Transverse colon (tissue), 4 donors: ENCODE measurements at regions of chr20 and their contacts with region 1.

Region 1: DNA sequence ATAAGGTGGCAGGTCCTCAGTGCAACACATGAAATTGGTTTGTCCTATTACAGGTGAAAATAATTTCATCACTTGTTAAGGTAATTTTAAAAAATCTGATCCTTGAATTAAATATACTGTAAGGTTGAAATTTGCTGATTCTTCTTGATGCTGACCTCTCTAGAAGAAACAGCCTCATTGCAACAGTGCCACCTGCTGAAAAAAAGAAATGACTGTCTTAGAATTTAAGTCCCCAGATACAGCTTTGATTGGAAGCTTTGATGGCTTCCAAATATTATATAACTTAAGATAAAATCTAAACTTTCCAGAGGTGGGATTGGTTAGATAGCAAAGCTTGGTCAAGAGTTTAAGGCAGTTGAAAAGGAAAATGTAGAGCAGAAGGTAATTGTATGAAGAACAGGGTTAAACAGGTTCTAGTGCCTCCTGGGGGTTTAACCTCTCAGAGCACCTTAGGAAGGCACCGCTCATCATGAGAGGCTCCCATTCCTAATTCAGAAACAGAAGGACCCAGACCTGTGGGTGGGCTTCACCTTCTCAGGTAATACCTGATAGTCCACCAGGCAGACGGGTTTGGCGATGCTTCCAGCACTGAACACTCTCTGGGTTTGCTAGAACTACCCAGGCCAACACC is 401.0 kb downstream of the PAX1 start:
- DNase-seq: no peak
- H3K4me3 ChIP-seq: no peak overlapping the region
- H3K27ac ChIP-seq: no peak overlapping the region
- H3K4me1 ChIP-seq: no peaks in the 10 kb centered on the region
- H3K27me3 ChIP-seq: no peaks in the 10 kb centered on the region
- CTCF ChIP-seq: peak in 3 of 5 experiments; percentile 33 to 54 (median 33)
- EP300 ChIP-seq: no peak
- POLR2A ChIP-seq: no peak

Region 2: DNA sequence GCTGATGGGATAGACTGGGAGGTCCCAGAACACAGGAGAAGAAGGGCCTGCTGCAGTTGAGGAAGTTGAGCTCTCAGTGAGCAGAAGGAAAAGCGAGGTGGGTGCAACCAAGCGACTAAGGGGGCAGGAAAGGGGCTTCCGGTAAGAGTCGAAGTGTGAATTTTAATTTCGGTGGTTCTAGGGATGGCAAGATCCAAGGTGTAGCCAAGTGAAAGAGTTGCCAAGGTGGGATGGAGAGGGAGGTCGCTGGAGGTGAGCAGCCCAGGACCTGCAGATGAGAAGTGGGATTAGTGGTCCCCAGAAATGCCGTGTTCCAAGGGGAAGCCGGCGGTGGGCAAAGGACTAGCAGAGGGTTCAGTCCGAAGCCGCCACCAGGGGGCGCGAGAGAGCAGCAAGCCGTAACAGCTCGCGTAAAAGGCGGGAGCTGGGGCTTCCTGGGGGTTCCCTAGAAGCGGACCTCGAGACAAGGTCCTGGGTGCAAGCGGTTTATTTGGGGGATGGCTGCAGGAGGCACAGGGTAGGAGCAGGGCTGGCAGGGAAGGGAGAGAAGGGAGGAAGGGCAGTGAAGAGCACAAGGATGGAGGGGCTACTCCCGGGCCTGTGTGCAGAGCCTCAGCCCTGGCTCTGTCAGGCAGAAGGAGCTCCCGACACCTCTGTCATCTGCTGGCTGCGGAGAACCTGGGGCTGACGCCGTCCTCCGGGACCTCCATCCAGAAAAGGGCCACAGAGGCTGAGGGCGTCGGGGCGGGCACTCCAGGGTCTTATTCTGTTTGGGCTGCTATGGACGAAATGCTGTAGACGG is 297.4 kb before region 1 on chr20:
- in situ Hi-C with region 1: no loop called
- intact Hi-C with region 1: loop called (anchors 5 kb)
- DNase-seq: peak; percentile 36
- H3K4me3 ChIP-seq: no peak overlapping the region
- H3K27ac ChIP-seq: no peak overlapping the region
- H3K4me1 ChIP-seq: no peaks in the 10 kb centered on the region
- H3K27me3 ChIP-seq: no peaks in the 10 kb centered on the region
- CTCF ChIP-seq: peak; percentile 54 to 74 (median 71)
- EP300 ChIP-seq: no peak
- POLR2A ChIP-seq: no peak

Region 3: GRCh38 chr20:21894579-21894978 is 211.8 kb before region 1 on chr20:
- in situ Hi-C with region 1: no loop called
- intact Hi-C with region 1: no loop called
- DNase-seq: no peak
- H3K4me3 ChIP-seq: no peak overlapping the region
- H3K27ac ChIP-seq: no peak overlapping the region
- H3K4me1 ChIP-seq: no peaks in the 10 kb centered on the region
- H3K27me3 ChIP-seq: no peaks in the 10 kb centered on the region
- CTCF ChIP-seq: no peak
- EP300 ChIP-seq: no peak
- POLR2A ChIP-seq: no peak

Region 4: GRCh38 chr20:22001886-22002285 is 104.5 kb before region 1 on chr20:
- in situ Hi-C with region 1: loop called in 1 of 4 experiments (anchors 25 kb)
- intact Hi-C with region 1: no loop called
- DNase-seq: no peak
- H3K4me3 ChIP-seq: no peak overlapping the region
- H3K27ac ChIP-seq: no peak overlapping the region
- H3K4me1 ChIP-seq: no peaks in the 10 kb centered on the region
- H3K27me3 ChIP-seq: no peaks in the 10 kb centered on the region
- CTCF ChIP-seq: no peak
- EP300 ChIP-seq: no peak
- POLR2A ChIP-seq: no peak

Region 5: GRCh38 chr20:22204801-22205200 is 98.4 kb after region 1 on chr20:
- in situ Hi-C with region 1: no loop called
- intact Hi-C with region 1: no loop called
- DNase-seq: no peak
- H3K4me3 ChIP-seq: no peak overlapping the region
- H3K27ac ChIP-seq: no peak overlapping the region
- H3K4me1 ChIP-seq: no peaks in the 10 kb centered on the region
- H3K27me3 ChIP-seq: no peaks in the 10 kb centered on the region
- CTCF ChIP-seq: no peak
- EP300 ChIP-seq: no peak
- POLR2A ChIP-seq: no peak

Region 6: GRCh38 chr20:22243067-22243466 is 136.6 kb after region 1 on chr20:
- in situ Hi-C with region 1: no loop called
- intact Hi-C with region 1: no loop called
- DNase-seq: no peak
- H3K4me3 ChIP-seq: no peak overlapping the region
- H3K27ac ChIP-seq: no peak overlapping the region
- H3K4me1 ChIP-seq: no peaks in the 10 kb centered on the region
- H3K27me3 ChIP-seq: no peaks in the 10 kb centered on the region
- CTCF ChIP-seq: no peak
- EP300 ChIP-seq: no peak
- POLR2A ChIP-seq: no peak